Heart right ventricle (tissue), 16 donors: ENCODE measurements at regions of chr6 and their contacts with region 1.

Region 1: GRCh38 chr6:11232193-11232769 is at the start of gene NEDD9:
- DNase-seq: peak; percentile 92 to 96
- ATAC-seq: peak; percentile 96 to 99 (median 97)
- H3K4me3 ChIP-seq: peak within 1 kb of the TSS; percentile 37 to 78 (median 67)
- H3K27ac ChIP-seq: peak within 1 kb of the TSS; percentile 76 to 93 (median 88)
- H3K4me1 ChIP-seq: peaks cover 0 to 54% (median 18%) of the 10 kb centered on the region in 9 donors
- H3K27me3 ChIP-seq: no peaks in the 10 kb centered on the region
- CTCF ChIP-seq: no peak
- total RNA-seq, gene NEDD9: 10.8 to 34.2 (median 24.6) TPM

Region 2: GRCh38 chr6:11144393-11144851 is 87.9 kb before region 1 on chr6:
- intact Hi-C with region 1: loop called in 1 of 10 experiments (anchors 5 kb)
- DNase-seq: peak; percentile 75 to 82
- ATAC-seq: peak; percentile 91 to 95 (median 94)
- H3K4me3 ChIP-seq: no peak overlapping the region
- H3K27ac ChIP-seq: no peak overlapping the region
- H3K4me1 ChIP-seq: peaks cover 0 to 17% (median 0%) of the 10 kb centered on the region in 9 donors
- H3K27me3 ChIP-seq: no peaks in the 10 kb centered on the region
- CTCF ChIP-seq: peak; percentile 77 to 97 (median 92)

Region 3: DNA sequence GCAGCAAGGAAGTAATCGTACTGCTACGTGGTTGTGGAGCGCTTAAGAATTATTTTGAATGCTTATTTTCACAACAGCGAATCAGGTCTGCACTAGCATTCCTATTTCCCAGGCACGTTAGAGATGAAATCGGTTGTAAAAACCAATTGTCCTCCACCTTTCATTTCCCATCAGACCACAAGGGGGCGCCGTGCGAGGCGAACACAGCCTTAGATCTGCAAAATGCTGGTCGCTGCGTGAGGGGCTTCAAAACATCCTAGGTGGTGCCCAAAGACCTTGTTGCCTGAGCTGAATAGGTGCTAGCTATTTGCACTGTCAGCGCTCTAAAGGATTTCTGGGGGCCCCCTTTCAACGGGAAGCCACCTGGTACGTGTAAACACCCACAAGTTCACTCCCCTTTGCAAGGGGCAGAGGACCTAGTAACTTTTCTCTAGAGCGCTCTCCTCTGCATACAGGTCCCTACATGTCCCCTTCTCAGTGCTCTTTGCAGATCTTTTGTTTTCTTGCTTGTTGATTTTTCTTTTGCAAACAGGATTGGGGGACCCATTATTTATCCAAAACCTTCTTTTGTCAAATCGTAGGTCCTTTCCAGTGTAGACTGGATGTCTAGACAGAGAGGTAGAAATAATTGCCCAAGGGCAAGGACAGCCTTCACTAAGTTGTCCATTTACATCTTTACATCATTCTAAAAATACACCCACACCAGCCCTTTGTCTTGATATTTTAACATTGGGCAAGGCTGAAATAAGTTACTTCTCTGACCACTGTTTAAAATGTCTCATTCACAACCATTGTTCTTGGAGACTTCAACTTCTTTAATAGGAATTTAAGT is 59.6 kb before region 1 on chr6:
- intact Hi-C with region 1: loop called in 4 of 10 experiments (anchors 5 to 10 kb)
- DNase-seq: peak; percentile 65 to 73
- ATAC-seq: peak in 7 of 8 donors; percentile 44 to 85 (median 67)
- H3K4me3 ChIP-seq: peak overlapping the region in 1 of 10 donors; percentile 19
- H3K27ac ChIP-seq: peak overlapping the region in 1 of 10 donors; percentile 13
- H3K4me1 ChIP-seq: peaks cover 0 to 27% (median 9%) of the 10 kb centered on the region in 9 donors
- H3K27me3 ChIP-seq: no peaks in the 10 kb centered on the region
- CTCF ChIP-seq: peak; percentile 73 to 92 (median 86)

Region 4: GRCh38 chr6:11317885-11318771 is 85.8 kb after region 1 on chr6:
- intact Hi-C with region 1: loop called in 1 of 10 experiments (anchors 5 kb)
- DNase-seq: peak; percentile 29 to 62
- ATAC-seq: peak; percentile 65 to 91 (median 78)
- H3K4me3 ChIP-seq: no peak overlapping the region
- H3K27ac ChIP-seq: peak overlapping the region in 9 of 10 donors; percentile 12 to 71 (median 57)
- H3K4me1 ChIP-seq: peaks cover 0 to 44% (median 17%) of the 10 kb centered on the region in 9 donors
- H3K27me3 ChIP-seq: no peaks in the 10 kb centered on the region
- CTCF ChIP-seq: no peak

Region 5: DNA sequence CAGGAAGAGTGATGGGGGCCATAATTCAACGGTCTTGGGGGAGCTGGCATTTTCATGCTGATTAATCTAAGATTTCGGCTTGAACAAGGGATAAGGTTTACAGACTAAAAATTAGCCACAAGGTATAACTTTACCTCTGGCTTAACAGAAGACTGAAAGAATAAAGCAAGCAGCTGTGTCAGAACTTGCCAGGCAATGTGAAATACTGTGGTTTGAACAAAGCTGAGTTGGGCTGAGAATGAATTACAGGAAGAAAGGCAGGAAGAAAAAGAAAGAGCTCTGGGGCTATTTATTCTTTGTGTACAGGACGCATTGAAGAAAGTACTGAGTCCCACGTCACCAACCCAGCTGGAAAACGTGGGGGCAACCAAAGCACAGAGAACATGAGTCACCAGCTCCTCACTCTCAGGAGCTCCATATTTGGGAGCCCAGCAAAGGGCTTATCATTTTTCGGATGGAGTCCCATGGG is 121.7 kb after region 1 on chr6:
- intact Hi-C with region 1: loop called in 3 of 10 experiments (anchors 2 to 5 kb)
- DNase-seq: peak; percentile 31 to 74
- ATAC-seq: peak; percentile 71 to 91 (median 86)
- H3K4me3 ChIP-seq: no peak overlapping the region
- H3K27ac ChIP-seq: peak overlapping the region; percentile 53 to 95 (median 86)
- H3K4me1 ChIP-seq: peaks cover 9 to 80% (median 46%) of the 10 kb centered on the region in 9 donors
- H3K27me3 ChIP-seq: no peaks in the 10 kb centered on the region
- CTCF ChIP-seq: no peak

Region 6: GRCh38 chr6:11366183-11366933 is 134.1 kb after region 1 on chr6:
- intact Hi-C with region 1: loop called in 1 of 10 experiments (anchors 5 kb)
- DNase-seq: no peak
- ATAC-seq: peak in 1 of 8 donors; percentile 5
- H3K4me3 ChIP-seq: no peak overlapping the region
- H3K27ac ChIP-seq: peak overlapping the region; percentile 76 to 92 (median 86)
- H3K4me1 ChIP-seq: peaks cover 2 to 72% (median 63%) of the 10 kb centered on the region in 9 donors
- H3K27me3 ChIP-seq: no peaks in the 10 kb centered on the region
- CTCF ChIP-seq: no peak